ENCODE measurements at regions of chr13 and their contacts with region 1.

Region 1: GRCh38 chr13:77430377-77430951 is 103.6 kb upstream of the MYCBP2 start:
- DNase-seq: no peak
- ATAC-seq: no peak
- H3K4me3 ChIP-seq: no peak overlapping the region
- H3K4me3 Mint-ChIP-seq: no peak overlapping the region
- H3K27ac ChIP-seq: no peak overlapping the region
- H3K27ac Mint-ChIP-seq: no peak overlapping the region
- H3K4me1 ChIP-seq: no peaks in the 10 kb centered on the region
- H3K4me1 Mint-ChIP-seq: no peaks in the 10 kb centered on the region
- H3K27me3 ChIP-seq: no peaks in the 10 kb centered on the region
- H3K27me3 Mint-ChIP-seq: peaks cover 0 to 1% of the 10 kb centered on the region in 2 donors

Region 2: GRCh38 chr13:77415253-77416071 is 15.0 kb before region 1 on chr13:
- CTCF ChIA-PET with region 1: no interaction called
- POLR2A ChIA-PET with region 1: no interaction called
- DNase-seq: no peak
- ATAC-seq: no peak
- H3K4me3 ChIP-seq: no peak overlapping the region
- H3K4me3 Mint-ChIP-seq: no peak overlapping the region
- H3K27ac ChIP-seq: no peak overlapping the region
- H3K27ac Mint-ChIP-seq: no peak overlapping the region
- H3K4me1 ChIP-seq: no peaks in the 10 kb centered on the region
- H3K4me1 Mint-ChIP-seq: peaks cover 0 to 10% (median 0%) of the 10 kb centered on the region in 3 donors
- H3K27me3 ChIP-seq: no peaks in the 10 kb centered on the region
- H3K27me3 Mint-ChIP-seq: no peaks in the 10 kb centered on the region

Region 3: GRCh38 chr13:77448679-77449078 is 18.2 kb after region 1 on chr13:
- CTCF ChIA-PET with region 1: interaction called in 1 of 2 experiments, 10 read pairs
- POLR2A ChIA-PET with region 1: interaction called in 1 of 2 experiments, 3 read pairs
- DNase-seq: no peak
- ATAC-seq: no peak
- H3K4me3 ChIP-seq: no peak overlapping the region
- H3K4me3 Mint-ChIP-seq: no peak overlapping the region
- H3K27ac ChIP-seq: no peak overlapping the region
- H3K27ac Mint-ChIP-seq: no peak overlapping the region
- H3K4me1 ChIP-seq: no peaks in the 10 kb centered on the region
- H3K4me1 Mint-ChIP-seq: peaks cover 2 to 7% (median 3%) of the 10 kb centered on the region in 3 donors
- H3K27me3 ChIP-seq: no peaks in the 10 kb centered on the region
- H3K27me3 Mint-ChIP-seq: peaks cover 6% of the 10 kb centered on the region in 2 donors

Region 4: GRCh38 chr13:78286748-78287147 is 856.3 kb after region 1 on chr13:
- CTCF ChIA-PET with region 1: no interaction called
- POLR2A ChIA-PET with region 1: no interaction called
- DNase-seq: no peak
- ATAC-seq: no peak
- H3K4me3 ChIP-seq: no peak overlapping the region
- H3K4me3 Mint-ChIP-seq: no peak overlapping the region
- H3K27ac ChIP-seq: no peak overlapping the region
- H3K27ac Mint-ChIP-seq: no peak overlapping the region
- H3K4me1 ChIP-seq: no peaks in the 10 kb centered on the region
- H3K4me1 Mint-ChIP-seq: no peaks in the 10 kb centered on the region
- H3K27me3 ChIP-seq: no peaks in the 10 kb centered on the region
- H3K27me3 Mint-ChIP-seq: no peaks in the 10 kb centered on the region